Vagina (tissue), 2 donors: ENCODE measurements at regions of chr21 and their contacts with region 1.

Region 1: GRCh38 chr21:39613041-39613854 is 508 bp downstream of the B3GALT5 start:
- DNase-seq: no peak
- H3K4me3 ChIP-seq: peak overlapping the region; percentile 37 to 40
- H3K27ac ChIP-seq: no peak overlapping the region
- H3K4me1 ChIP-seq: no peaks in the 10 kb centered on the region
- H3K27me3 ChIP-seq: no peaks in the 10 kb centered on the region
- CTCF ChIP-seq: no peak
- POLR2A ChIP-seq: no peak

Region 2: DNA sequence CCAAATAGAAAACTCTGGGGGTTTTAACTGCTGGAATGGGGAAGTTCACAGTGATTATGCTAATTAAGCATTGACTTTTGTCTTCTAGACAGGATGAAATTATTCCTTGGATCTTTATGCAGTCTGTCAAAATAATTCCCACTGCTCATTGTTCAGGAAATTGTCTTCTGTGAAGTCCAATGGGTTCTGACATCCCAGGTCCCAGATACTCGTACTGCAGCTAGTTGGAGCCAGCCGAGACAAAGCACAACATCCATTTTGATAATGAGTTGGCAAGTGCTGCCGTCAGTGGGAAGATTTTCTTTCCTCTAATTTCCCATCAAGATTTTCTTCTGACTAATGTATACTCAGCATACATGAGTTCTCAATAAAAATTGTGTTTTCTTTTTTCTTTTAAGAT is 17.8 kb before region 1 on chr21:
- intact Hi-C with region 1: loop called (anchors 1 kb)
- DNase-seq: no peak
- H3K4me3 ChIP-seq: no peak overlapping the region
- H3K27ac ChIP-seq: no peak overlapping the region
- H3K4me1 ChIP-seq: no peaks in the 10 kb centered on the region
- H3K27me3 ChIP-seq: no peaks in the 10 kb centered on the region
- CTCF ChIP-seq: no peak
- POLR2A ChIP-seq: no peak